Heart left ventricle (tissue), 16 donors: ENCODE measurements at regions of chrX and their contacts with region 1.

Region 1: DNA sequence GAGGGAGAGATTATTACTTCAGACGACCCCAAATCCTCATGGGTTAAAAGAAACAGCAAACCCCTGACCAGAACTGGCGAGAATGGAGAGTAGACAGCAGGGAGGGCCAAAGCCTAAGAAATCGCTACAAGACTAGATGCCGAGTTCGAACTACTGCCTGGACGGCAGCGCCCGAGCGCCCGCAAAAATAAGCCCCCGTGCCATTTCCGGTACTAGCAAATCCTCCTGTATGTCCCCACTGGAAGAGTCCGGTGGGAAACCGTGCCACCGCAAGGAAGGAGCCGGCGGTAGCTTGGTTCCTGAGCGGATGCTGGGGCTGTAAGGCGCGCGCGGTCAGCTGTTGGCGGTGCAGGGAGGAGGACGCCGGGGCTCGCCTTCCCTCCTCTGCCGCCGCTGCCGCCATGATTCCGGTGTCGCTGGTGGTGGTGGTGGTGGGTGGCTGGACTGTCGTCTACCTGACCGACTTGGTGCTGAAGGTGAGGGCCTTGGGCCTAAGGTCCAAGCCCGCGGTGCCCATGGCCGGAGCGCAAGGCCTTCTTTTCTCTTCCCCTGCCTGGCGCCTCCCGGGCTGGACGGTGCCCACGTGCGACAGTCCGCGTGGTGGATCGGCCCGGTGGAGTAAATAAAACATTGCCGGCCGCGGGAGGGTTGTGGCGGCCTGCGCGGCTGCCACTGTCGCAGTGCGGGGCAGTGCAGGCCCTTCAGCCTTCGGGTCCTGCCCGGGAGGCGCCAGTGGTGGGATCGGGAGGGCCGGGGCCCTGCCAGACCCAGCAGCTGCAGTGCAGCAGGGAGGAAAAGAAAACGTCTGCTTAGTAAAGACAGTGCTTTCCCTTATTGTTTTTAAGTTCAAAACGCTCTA is at the start of gene MBTPS2:
- DNase-seq: peak; percentile 80 to 88 (median 83)
- ATAC-seq: peak; percentile 79 to 96 (median 94)
- H3K4me3 ChIP-seq: peak within 1 kb of the TSS; percentile 48 to 93 (median 72)
- H3K27ac ChIP-seq: peak within 1 kb of the TSS; percentile 63 to 86 (median 82)
- H3K4me1 ChIP-seq: peaks cover 0 to 19% (median 3%) of the 10 kb centered on the region in 12 donors
- H3K27me3 ChIP-seq: peaks cover 0 to 5% (median 0%) of the 10 kb centered on the region in 9 donors
- CTCF ChIP-seq: peak in 3 of 12 donors; percentile 11 to 26 (median 21)
- POLR2A ChIP-seq: peak in 1 of 2 donors; percentile 30
- total RNA-seq, gene MBTPS2: 7.5 to 14.8 (median 11.7) TPM

Region 2: GRCh38 chrX:21745756-21746155 is 93.8 kb before region 1 on chrX:
- intact Hi-C with region 1: loop called in 1 of 10 experiments (anchors 5 kb)
- DNase-seq: peak in 1 of 5 donors; percentile 26
- ATAC-seq: no peak
- H3K4me3 ChIP-seq: no peak overlapping the region
- H3K27ac ChIP-seq: peak overlapping the region in 1 of 12 donors; percentile 19
- H3K4me1 ChIP-seq: peaks cover 0 to 53% (median 1%) of the 10 kb centered on the region in 12 donors
- H3K27me3 ChIP-seq: peaks cover 0 to 11% (median 0%) of the 10 kb centered on the region in 9 donors
- CTCF ChIP-seq: peak; percentile 24 to 57 (median 45)
- POLR2A ChIP-seq: no peak

Region 3: DNA sequence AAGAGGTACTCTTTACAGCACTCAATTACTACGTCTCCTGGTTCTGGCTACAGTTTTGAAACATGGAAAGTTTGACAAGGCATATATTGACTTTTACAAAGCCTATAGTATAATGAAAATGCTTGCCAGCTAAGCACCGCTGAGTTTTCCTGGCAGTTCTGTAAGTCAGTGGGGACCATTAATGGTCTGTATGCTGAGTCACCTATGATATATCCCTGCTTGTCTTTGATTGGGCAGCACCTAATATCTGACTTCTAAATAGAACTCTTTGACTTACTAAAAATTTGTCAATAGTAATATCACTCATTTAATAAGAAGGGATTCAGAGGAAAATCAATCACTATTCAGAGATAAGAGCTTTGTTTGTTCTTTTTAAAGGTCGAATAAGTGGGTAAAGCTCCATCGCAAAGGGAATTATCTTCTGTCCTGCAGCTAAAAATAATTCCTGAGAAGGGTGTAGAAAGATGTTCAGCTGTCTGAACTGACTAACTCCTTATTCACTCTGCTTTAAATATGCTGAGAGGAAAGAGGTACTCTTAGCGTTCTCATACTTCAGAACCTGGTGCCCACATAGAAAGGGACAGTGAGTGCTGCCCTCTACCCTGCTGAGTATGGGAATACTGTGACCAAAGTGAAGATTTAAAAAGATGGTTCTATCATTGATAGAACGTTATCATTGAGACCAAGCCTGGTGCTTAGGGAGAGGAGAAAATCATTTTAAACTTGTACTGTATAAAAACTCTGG is 82.6 kb before region 1 on chrX:
- intact Hi-C with region 1: loop called in 5 of 10 experiments (anchors 2 to 10 kb)
- DNase-seq: no peak
- ATAC-seq: peak; percentile 82 to 89 (median 86)
- H3K4me3 ChIP-seq: peak overlapping the region; percentile 29 to 62 (median 49)
- H3K27ac ChIP-seq: peak overlapping the region; percentile 56 to 95 (median 84)
- H3K4me1 ChIP-seq: peaks cover 0 to 3% (median 0%) of the 10 kb centered on the region in 12 donors
- H3K27me3 ChIP-seq: peaks cover 0 to 4% (median 0%) of the 10 kb centered on the region in 9 donors
- CTCF ChIP-seq: peak in 6 of 12 donors; percentile 7 to 20 (median 14)
- POLR2A ChIP-seq: peak in 1 of 2 donors; percentile 14

Region 4: GRCh38 chrX:21764040-21764439 is 75.5 kb before region 1 on chrX:
- intact Hi-C with region 1: loop called in 3 of 10 experiments (anchors 5 to 10 kb)
- DNase-seq: no peak
- ATAC-seq: no peak
- H3K4me3 ChIP-seq: no peak overlapping the region
- H3K27ac ChIP-seq: no peak overlapping the region
- H3K4me1 ChIP-seq: no peaks in the 10 kb centered on the region
- H3K27me3 ChIP-seq: peaks cover 0 to 6% (median 0%) of the 10 kb centered on the region in 9 donors
- CTCF ChIP-seq: no peak
- POLR2A ChIP-seq: no peak

Region 5: DNA sequence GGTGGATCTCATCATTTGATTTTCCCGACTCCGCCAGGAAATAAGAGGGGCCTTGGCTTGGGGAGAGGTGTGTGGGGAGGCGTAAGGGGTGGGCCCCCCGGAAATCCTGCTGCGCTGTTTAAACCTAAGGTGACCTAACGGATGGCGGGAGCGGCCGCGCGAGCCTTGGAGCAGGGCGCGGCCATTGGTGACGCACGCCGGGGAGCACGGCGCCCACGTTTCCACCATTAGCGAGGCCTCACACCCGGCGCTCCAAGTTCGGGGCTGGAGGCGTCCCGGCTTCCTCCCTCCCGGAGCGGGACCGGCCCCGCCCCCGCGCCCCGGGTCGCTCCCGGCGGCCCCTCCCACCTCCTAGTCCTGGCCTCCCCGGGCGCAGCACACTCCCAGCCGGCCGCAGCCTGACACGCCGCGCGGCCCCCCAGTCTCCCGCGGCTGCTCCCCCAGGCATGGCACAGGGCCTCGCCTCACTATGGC is 100.8 kb after region 1 on chrX and contains the start of gene SMS:
- intact Hi-C with region 1: loop called in 3 of 10 experiments (anchors 1 to 10 kb)
- DNase-seq: peak; percentile 79 to 86 (median 85)
- ATAC-seq: peak; percentile 84 to 96 (median 94)
- H3K4me3 ChIP-seq: peak within 1 kb of the TSS; percentile 23 to 80 (median 57)
- H3K27ac ChIP-seq: peak within 1 kb of the TSS; percentile 47 to 82 (median 78)
- H3K4me1 ChIP-seq: peaks cover 0 to 21% (median 1%) of the 10 kb centered on the region in 12 donors
- H3K27me3 ChIP-seq: peaks cover 0 to 5% (median 0%) of the 10 kb centered on the region in 9 donors
- CTCF ChIP-seq: no peak
- POLR2A ChIP-seq: peak in 1 of 2 donors; percentile 57
- total RNA-seq, gene SMS: 25.5 to 77.2 (median 50.2) TPM

Region 6: GRCh38 chrX:21972721-21973120 is 133.2 kb after region 1 on chrX:
- intact Hi-C with region 1: loop called in 2 of 10 experiments (anchors 10 kb)
- DNase-seq: peak in 1 of 5 donors; percentile 55
- ATAC-seq: peak; percentile 66 to 88 (median 78)
- H3K4me3 ChIP-seq: no peak overlapping the region
- H3K27ac ChIP-seq: peak overlapping the region in 1 of 12 donors; percentile 34
- H3K4me1 ChIP-seq: peaks cover 0 to 13% (median 0%) of the 10 kb centered on the region in 12 donors
- H3K27me3 ChIP-seq: no peaks in the 10 kb centered on the region
- CTCF ChIP-seq: no peak
- POLR2A ChIP-seq: no peak

Region 7: GRCh38 chrX:22220941-22221340 is 381.4 kb after region 1 on chrX:
- intact Hi-C with region 1: no loop called
- DNase-seq: no peak
- ATAC-seq: no peak
- H3K4me3 ChIP-seq: no peak overlapping the region
- H3K27ac ChIP-seq: no peak overlapping the region
- H3K4me1 ChIP-seq: no peaks in the 10 kb centered on the region
- H3K27me3 ChIP-seq: peaks cover 0 to 3% (median 0%) of the 10 kb centered on the region in 9 donors
- CTCF ChIP-seq: no peak
- POLR2A ChIP-seq: no peak